ENCODE measurements at regions of chr1 and their contacts with region 1.

Region 1: DNA sequence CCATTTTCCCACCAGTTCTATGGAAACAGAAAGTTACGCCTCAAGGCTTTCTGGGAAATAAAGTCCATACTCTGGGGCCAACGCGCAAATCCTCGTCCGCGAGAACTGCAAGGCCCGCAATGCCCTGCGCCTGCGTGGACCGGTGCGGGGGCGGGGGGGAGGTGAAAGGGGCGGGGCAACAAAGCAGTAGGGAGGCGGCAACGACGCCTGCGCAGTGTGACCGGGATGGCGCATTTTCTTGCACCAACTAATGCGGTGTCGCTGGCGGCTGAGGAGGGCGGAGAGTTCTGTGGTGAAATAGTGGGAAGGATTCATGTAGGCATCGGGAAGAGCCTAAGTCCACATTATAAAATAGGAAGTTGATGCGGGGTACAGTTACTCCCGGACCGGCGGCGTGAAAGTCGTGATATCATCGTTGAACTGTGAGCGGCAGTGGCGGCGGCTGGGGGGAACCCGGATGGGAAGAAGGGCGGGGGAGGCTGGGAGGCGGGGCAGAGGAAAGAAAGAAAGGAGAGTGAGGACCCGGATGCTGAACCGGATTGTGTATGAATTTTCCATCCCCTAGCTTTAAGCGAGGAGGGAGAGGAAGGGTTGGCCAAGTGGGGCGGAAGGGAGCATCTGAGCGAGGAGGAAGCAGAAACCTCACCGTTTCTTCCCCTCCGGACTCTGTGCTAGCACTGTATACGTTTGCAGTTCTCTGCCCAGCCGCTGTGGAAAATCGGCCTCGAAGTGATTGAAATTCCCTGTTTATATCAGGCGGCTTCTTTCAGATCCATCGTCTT is at the start of gene GGPS1:
- DNase-seq: peak; percentile 100
- H3K4me3 Mint-ChIP-seq: no peak within 1 kb of the TSS
- H3K27ac Mint-ChIP-seq: no peak within 1 kb of the TSS
- H3K4me1 Mint-ChIP-seq: peaks cover 42% of the 10 kb centered on the region
- H3K27me3 Mint-ChIP-seq: no peaks in the 10 kb centered on the region
- total RNA-seq, gene GGPS1: 36.1 to 37.5 TPM

Region 2: GRCh38 chr1:234599617-234600417 is 728.7 kb before region 1 on chr1:
- CTCF ChIA-PET with region 1: no interaction called
- POLR2A ChIA-PET with region 1: interaction called, 4 read pairs
- intact Hi-C with region 1: loop called (anchors 2 kb)
- DNase-seq: peak; percentile 82
- H3K4me3 Mint-ChIP-seq: peak overlapping the region; percentile 85
- H3K27ac Mint-ChIP-seq: peak overlapping the region; percentile 100
- H3K4me1 Mint-ChIP-seq: peaks cover 54% of the 10 kb centered on the region
- H3K27me3 Mint-ChIP-seq: no peaks in the 10 kb centered on the region

Region 3: GRCh38 chr1:235105051-235106043 is 223.2 kb before region 1 on chr1:
- CTCF ChIA-PET with region 1: interaction called, 3 read pairs
- POLR2A ChIA-PET with region 1: no interaction called
- intact Hi-C with region 1: loop called (anchors 5 kb)
- DNase-seq: peak; percentile 40
- H3K4me3 Mint-ChIP-seq: peak overlapping the region; percentile 67
- H3K27ac Mint-ChIP-seq: peak overlapping the region; percentile 68
- H3K4me1 Mint-ChIP-seq: peaks cover 39% of the 10 kb centered on the region
- H3K27me3 Mint-ChIP-seq: no peaks in the 10 kb centered on the region

Region 4: DNA sequence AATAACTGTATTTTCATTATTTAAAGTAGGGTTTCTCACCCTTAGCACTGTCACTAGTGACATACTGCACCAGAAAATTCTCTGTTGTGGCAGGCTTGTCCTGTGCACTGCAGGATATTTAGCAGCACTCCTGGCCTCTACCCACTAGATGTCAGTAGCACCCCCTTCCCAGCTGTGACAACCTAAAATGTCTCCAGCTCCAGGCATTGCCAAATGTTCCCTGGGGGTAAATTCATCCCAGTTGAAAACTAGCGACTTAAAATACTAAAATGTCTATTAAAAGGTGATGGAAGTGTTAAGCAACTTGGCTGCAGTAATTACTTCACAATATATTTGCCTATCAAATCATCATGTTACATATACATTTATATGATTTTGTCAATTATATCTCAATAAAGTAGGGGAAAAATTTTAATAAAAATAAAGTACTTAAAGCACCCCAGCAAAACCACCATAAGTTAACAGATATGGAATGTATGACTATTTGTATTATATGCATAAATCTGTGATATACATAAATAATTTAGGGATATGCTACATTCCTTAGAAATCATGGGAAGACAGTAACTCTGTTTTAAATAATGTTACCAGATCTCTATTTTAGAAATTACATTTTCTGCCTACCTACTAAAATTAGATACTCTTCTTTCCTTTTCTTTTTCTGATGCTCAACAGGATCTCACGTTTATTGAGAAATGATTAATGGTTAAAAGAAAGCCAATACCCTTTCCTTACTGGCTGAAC is 75.2 kb before region 1 on chr1:
- CTCF ChIA-PET with region 1: interaction called, 10 read pairs
- POLR2A ChIA-PET with region 1: no interaction called
- intact Hi-C with region 1: loop called (anchors 1 kb)
- DNase-seq: peak; percentile 75
- H3K4me3 Mint-ChIP-seq: no peak overlapping the region
- H3K27ac Mint-ChIP-seq: no peak overlapping the region
- H3K4me1 Mint-ChIP-seq: peaks cover 24% of the 10 kb centered on the region
- H3K27me3 Mint-ChIP-seq: no peaks in the 10 kb centered on the region

Region 5: GRCh38 chr1:235317168-235317567 is 11.4 kb before region 1 on chr1:
- CTCF ChIA-PET with region 1: interaction called, 4 read pairs
- POLR2A ChIA-PET with region 1: interaction called, 4 read pairs
- intact Hi-C with region 1: loop called (anchors 1 kb)
- DNase-seq: no peak
- H3K4me3 Mint-ChIP-seq: no peak overlapping the region
- H3K27ac Mint-ChIP-seq: peak overlapping the region; percentile 68
- H3K4me1 Mint-ChIP-seq: peaks cover 74% of the 10 kb centered on the region
- H3K27me3 Mint-ChIP-seq: no peaks in the 10 kb centered on the region

Region 6: DNA sequence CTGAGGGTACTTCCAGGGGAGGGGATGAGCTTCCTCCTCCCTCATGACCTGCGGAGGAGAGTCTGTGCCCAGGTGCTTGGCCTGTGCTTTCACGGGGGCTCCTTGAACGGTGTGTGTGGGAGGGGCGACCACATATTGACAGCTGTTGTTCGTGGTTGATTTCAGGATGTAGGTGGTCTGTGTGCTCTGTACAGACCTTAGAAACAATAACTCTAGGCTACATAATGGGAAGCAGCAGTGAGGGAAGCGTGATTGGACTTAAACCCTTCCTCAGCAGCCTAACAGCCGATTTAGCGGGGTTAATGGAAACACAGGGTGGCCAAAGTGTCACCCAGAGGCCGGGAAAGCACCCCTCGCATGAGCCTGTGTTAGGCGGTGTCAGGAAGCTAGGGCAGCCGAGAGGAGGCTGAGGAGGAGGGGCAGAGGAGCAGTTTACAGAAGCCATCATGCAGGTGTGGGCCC is 94.7 kb after region 1 on chr1:
- CTCF ChIA-PET with region 1: no interaction called
- POLR2A ChIA-PET with region 1: no interaction called
- intact Hi-C with region 1: no loop called
- DNase-seq: peak; percentile 44
- H3K4me3 Mint-ChIP-seq: no peak overlapping the region
- H3K27ac Mint-ChIP-seq: no peak overlapping the region
- H3K4me1 Mint-ChIP-seq: peaks cover 16% of the 10 kb centered on the region
- H3K27me3 Mint-ChIP-seq: no peaks in the 10 kb centered on the region

Region 7: GRCh38 chr1:235866913-235867845 is 538.6 kb after region 1 on chr1:
- CTCF ChIA-PET with region 1: interaction called, 3 read pairs
- POLR2A ChIA-PET with region 1: no interaction called
- intact Hi-C with region 1: loop called (anchors 5 kb)
- DNase-seq: peak; percentile 98
- H3K4me3 Mint-ChIP-seq: peak overlapping the region; percentile 89
- H3K27ac Mint-ChIP-seq: peak overlapping the region; percentile 98
- H3K4me1 Mint-ChIP-seq: peaks cover 45% of the 10 kb centered on the region
- H3K27me3 Mint-ChIP-seq: no peaks in the 10 kb centered on the region

Region 8: DNA sequence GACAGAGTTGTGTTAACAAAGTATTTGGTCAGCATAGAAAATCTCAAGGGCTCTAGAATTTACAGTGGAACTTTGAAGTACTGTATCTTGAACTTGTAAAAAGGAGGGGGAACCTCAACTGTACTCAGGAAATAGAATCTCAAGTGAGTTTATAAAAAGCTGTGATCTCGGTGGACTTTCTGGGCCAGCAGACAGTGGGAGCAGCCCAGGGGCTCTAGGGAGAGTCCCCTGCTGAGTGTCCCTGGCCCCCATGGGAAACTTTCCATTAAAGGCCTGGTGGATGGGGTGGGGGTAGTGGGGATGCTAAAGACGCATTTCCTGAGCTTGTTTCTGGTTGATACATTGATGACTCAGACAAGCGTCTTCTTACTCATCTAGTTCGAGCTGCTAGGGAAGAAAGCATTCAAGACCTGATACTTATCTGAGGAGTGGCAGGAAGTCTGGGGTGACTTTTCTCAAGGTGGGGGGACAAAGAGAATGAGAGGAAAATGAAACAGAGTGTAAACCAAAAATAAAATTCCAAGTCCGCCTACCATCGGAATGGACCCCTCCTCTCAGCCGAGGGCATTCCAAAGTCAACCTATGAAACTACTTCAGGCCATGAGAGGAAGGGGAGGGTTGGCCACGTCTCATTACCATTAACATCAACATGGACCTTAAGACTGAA is 670.8 kb after region 1 on chr1:
- CTCF ChIA-PET with region 1: no interaction called
- POLR2A ChIA-PET with region 1: no interaction called
- intact Hi-C with region 1: no loop called
- DNase-seq: peak; percentile 83
- H3K4me3 Mint-ChIP-seq: peak overlapping the region; percentile 53
- H3K27ac Mint-ChIP-seq: peak overlapping the region; percentile 89
- H3K4me1 Mint-ChIP-seq: peaks cover 53% of the 10 kb centered on the region
- H3K27me3 Mint-ChIP-seq: no peaks in the 10 kb centered on the region

Measured in activated CD4-positive, alpha-beta memory T cell treated with anti-CD3 and anti-CD28 coated beads for 36 hours (primary cell).